Colonic mucosa (tissue), 4 donors: ENCODE measurements at regions of chr11 and their contacts with region 1.

Region 1: DNA sequence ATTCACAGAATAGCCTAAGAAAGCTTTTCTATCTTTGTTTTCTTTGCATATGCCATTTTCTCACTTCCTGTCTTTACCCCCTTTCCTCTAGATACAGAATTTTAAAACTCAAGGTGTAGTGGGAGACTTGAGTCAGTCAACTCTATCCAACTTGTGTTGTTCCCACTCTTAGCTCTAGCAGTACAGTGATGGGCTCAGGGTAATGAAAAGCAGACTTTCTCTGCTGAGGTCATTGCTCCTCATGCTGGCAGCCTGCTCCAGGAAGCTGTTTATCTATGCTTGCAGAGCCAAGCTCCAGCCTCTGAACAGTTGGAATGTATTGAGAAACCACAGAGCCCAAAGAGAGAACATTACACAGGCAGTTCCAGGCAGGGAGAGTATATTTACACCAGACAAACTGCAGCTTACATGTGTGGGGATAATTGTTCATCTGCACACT is 68.1 kb downstream of the CSTPP1 start:
- DNase-seq: peak; percentile 73
- H3K4me3 ChIP-seq: no peak overlapping the region
- H3K27ac ChIP-seq: peak overlapping the region; percentile 42
- H3K4me1 ChIP-seq: peaks cover 3% of the 10 kb centered on the region
- H3K27me3 ChIP-seq: no peaks in the 10 kb centered on the region
- CTCF ChIP-seq: no peak

Region 2: GRCh38 chr11:46916286-46917108 is 88.1 kb before region 1 on chr11:
- intact Hi-C with region 1: loop called (anchors 10 kb)
- DNase-seq: peak; percentile 62
- H3K4me3 ChIP-seq: peak overlapping the region; percentile 86
- H3K27ac ChIP-seq: peak overlapping the region; percentile 1
- H3K4me1 ChIP-seq: no peaks in the 10 kb centered on the region
- H3K27me3 ChIP-seq: peaks cover 3% of the 10 kb centered on the region
- CTCF ChIP-seq: no peak